OCI-LY7 (cell line): ENCODE measurements at regions of chr15 and their contacts with region 1.

Region 1: GRCh38 chr15:81336568-81336967 is 12.6 kb upstream of the STARD5 start:
- DNase-seq: peak; percentile 69
- H3K4me3 ChIP-seq: no peak overlapping the region
- H3K27ac ChIP-seq: no peak overlapping the region
- H3K4me1 ChIP-seq: peaks cover 17% of the 10 kb centered on the region
- CTCF ChIP-seq: peak; percentile 87

Region 2: DNA sequence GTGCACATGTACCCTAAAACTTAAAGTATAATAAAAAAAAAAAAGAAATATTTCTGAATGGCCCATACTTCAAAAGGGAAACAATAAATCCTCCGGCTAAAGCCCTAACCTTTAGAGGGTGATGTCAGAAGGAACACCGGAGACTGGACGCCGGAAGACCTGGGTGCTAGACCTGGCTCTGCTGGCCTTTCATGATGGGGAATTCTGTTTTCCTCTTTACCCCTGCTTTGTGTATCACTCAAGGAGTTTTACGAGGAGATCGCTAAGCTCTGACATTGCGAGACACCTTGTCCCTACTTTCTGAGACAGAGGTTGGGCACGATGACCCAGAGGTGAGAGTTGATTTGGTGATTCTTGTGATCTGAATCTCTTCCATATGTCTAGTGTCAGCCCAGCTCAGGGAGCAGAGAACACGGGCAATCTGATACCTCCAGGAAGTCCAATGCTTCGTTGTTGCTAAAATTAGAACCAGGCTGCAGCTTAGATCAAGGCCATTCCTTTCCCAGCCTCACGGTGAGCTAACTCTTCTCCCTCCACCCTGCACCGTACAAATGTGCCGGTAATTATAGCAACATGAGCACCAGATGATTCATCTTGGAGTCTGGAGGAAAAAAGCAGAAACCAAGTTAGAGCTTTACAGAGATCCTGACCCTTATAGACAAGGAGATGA is 244.5 kb before region 1 on chr15:
- CTCF ChIA-PET with region 1: no interaction called
- POLR2A ChIA-PET with region 1: no interaction called
- intact Hi-C with region 1: no loop called
- DNase-seq: no peak
- H3K4me3 ChIP-seq: no peak overlapping the region
- H3K27ac ChIP-seq: no peak overlapping the region
- H3K4me1 ChIP-seq: no peaks in the 10 kb centered on the region
- CTCF ChIP-seq: no peak

Region 3: DNA sequence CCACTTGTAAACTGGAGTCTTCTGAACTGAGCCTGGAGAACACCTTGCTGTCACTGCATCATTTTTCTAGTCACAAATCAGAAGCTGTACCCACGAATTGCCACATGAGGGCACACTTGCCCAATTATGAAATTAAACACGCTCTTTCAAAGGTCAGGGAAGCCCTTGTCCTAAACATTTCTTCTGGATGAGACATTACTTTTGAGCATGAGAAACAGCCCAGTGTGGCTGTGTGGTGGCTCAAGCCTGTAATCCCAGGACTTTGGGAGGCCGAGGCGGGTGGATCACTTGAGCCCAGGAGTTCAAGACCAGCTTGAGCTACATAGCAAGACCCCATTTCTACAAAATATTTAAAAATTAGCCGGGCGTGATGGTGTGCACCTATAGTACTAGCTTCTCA is 230.0 kb before region 1 on chr15:
- CTCF ChIA-PET with region 1: no interaction called
- POLR2A ChIA-PET with region 1: no interaction called
- intact Hi-C with region 1: loop called (anchors 5 kb)
- DNase-seq: peak; percentile 54
- H3K4me3 ChIP-seq: no peak overlapping the region
- H3K27ac ChIP-seq: no peak overlapping the region
- H3K4me1 ChIP-seq: no peaks in the 10 kb centered on the region
- CTCF ChIP-seq: peak; percentile 85

Region 4: GRCh38 chr15:81155375-81156218 is 181.0 kb before region 1 on chr15:
- CTCF ChIA-PET with region 1: no interaction called
- POLR2A ChIA-PET with region 1: no interaction called
- intact Hi-C with region 1: loop called (anchors 10 kb)
- DNase-seq: peak; percentile 62
- H3K4me3 ChIP-seq: no peak overlapping the region
- H3K27ac ChIP-seq: no peak overlapping the region
- H3K4me1 ChIP-seq: no peaks in the 10 kb centered on the region
- CTCF ChIP-seq: peak; percentile 81

Region 5: GRCh38 chr15:81274931-81275707 is 61.4 kb before region 1 on chr15:
- CTCF ChIA-PET with region 1: interaction called, 7 read pairs
- POLR2A ChIA-PET with region 1: interaction called, 5 read pairs
- intact Hi-C with region 1: loop called (anchors 1 kb)
- DNase-seq: peak; percentile 89
- H3K4me3 ChIP-seq: no peak overlapping the region
- H3K27ac ChIP-seq: no peak overlapping the region
- H3K4me1 ChIP-seq: peaks cover 10% of the 10 kb centered on the region
- CTCF ChIP-seq: peak; percentile 84

Region 6: DNA sequence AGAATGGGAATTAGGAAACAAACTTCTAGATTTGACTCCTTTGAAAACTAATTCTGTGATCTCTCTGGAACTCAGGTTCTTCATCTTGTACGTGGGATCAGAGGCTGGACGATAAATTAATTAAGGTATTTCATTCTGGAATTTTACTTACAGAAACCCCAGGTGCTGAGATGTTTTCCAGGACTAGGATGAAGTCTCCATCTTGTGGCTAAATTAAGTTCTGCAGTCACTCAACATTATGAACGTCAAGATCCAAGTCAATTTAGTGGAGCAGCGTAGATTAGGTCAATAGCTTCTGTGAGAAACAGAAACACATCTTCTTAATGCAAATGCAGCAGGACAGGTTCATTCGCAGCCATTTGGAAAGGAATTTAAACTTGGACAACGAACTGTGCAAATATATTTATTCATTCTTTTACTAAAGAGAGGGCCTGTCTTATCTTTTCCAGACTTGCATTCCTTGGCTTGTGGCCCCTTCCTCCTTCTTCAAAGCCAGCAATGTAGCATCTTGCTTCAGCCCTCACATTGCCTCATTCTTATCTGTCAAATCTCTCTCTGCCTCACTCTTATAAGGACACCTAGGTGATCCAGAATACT is 64.2 kb after region 1 on chr15:
- CTCF ChIA-PET with region 1: no interaction called
- POLR2A ChIA-PET with region 1: no interaction called
- intact Hi-C with region 1: loop called (anchors 5 kb)
- DNase-seq: peak; percentile 58
- H3K4me3 ChIP-seq: no peak overlapping the region
- H3K27ac ChIP-seq: no peak overlapping the region
- H3K4me1 ChIP-seq: no peaks in the 10 kb centered on the region
- CTCF ChIP-seq: peak; percentile 89

Region 7: GRCh38 chr15:81955382-81956062 is 619.0 kb after region 1 on chr15:
- CTCF ChIA-PET with region 1: no interaction called
- POLR2A ChIA-PET with region 1: no interaction called
- intact Hi-C with region 1: no loop called
- DNase-seq: no peak
- H3K4me3 ChIP-seq: no peak overlapping the region
- H3K27ac ChIP-seq: no peak overlapping the region
- H3K4me1 ChIP-seq: no peaks in the 10 kb centered on the region
- CTCF ChIP-seq: no peak